ENCODE measurements at regions of chr14 and their contacts with region 1.

Region 1: GRCh38 chr14:72812292-72812911 is 81.5 kb downstream of the DPF3 start:
- DNase-seq: peak; percentile 93 to 99
- ATAC-seq: peak; percentile 88 to 89
- H3K4me3 ChIP-seq: peak overlapping the region; percentile 8 to 31 (median 20)
- H3K27ac ChIP-seq: peak overlapping the region; percentile 90 to 97 (median 94)
- H3K4me1 ChIP-seq: peaks cover 64 to 71% of the 10 kb centered on the region in 2 donors
- H3K27me3 ChIP-seq: no peaks in the 10 kb centered on the region
- CTCF ChIP-seq: peak in 2 of 5 experiments; percentile 25 to 31
- POLR2A ChIP-seq: peak; percentile 53 to 62

Region 2: DNA sequence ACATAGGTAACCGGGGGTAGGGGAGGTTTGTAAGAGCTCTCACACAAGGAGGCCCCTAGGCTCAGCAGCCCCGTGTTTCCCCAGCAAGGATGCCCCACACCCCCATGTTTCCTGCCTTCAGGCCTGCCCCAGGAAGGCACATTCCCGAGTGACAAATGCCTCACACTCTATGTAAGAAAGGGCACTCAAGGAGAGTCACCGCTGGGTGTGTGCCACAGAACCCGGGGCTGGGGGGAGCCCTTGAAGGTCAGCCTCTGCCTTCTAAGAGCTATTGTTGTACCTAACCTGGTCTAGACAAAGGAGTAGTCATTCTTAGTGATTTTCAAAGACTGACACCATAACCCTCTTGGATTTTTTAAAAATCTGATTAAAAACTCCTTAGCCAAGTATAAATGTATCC is 252.1 kb before region 1 on chr14:
- in situ Hi-C with region 1: no loop called
- intact Hi-C with region 1: loop called (anchors 5 kb)
- DNase-seq: no peak
- ATAC-seq: no peak
- H3K4me3 ChIP-seq: no peak overlapping the region
- H3K27ac ChIP-seq: peak overlapping the region in 1 of 4 donors; percentile 10
- H3K4me1 ChIP-seq: peaks cover 32 to 45% of the 10 kb centered on the region in 2 donors
- H3K27me3 ChIP-seq: no peaks in the 10 kb centered on the region
- CTCF ChIP-seq: no peak
- POLR2A ChIP-seq: no peak

Region 3: DNA sequence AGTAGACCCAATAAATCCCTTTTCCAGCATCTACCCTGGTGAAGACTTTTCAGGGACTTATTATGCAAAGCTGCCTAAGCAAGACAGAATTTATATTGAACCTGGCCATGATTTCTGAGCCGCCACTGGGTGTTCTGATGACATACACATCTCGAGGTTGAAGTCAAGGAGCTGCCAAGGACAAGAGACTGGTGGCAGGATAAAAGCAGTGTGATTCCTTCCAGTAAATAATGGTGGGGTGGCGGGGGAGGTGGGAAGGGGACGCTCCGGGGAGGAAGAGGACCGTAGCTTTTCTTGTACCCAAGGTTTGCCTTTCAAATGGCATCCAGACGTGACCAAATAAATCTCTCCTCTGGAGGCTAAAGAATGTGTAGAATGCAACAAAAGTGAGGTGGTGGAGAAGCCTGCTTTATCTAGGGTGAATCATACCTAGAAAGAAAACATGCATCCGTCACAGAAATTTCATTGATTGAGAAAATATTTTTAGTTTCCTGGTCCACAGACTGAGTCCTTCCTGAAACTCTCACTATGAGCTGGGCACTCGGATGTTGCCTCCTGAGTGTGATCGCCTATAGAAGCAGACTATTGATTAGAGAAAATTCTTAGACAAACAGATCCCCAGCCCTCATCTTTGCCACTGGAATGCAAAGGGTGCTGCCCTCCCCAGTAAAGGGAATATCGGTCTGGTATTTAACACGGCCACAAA is 30.8 kb before region 1 on chr14:
- in situ Hi-C with region 1: no loop called
- intact Hi-C with region 1: no loop called
- DNase-seq: no peak
- ATAC-seq: peak; percentile 52 to 69
- H3K4me3 ChIP-seq: no peak overlapping the region
- H3K27ac ChIP-seq: peak overlapping the region; percentile 67 to 93 (median 77)
- H3K4me1 ChIP-seq: peaks cover 43 to 72% of the 10 kb centered on the region in 2 donors
- H3K27me3 ChIP-seq: no peaks in the 10 kb centered on the region
- CTCF ChIP-seq: no peak
- POLR2A ChIP-seq: no peak

Region 4: DNA sequence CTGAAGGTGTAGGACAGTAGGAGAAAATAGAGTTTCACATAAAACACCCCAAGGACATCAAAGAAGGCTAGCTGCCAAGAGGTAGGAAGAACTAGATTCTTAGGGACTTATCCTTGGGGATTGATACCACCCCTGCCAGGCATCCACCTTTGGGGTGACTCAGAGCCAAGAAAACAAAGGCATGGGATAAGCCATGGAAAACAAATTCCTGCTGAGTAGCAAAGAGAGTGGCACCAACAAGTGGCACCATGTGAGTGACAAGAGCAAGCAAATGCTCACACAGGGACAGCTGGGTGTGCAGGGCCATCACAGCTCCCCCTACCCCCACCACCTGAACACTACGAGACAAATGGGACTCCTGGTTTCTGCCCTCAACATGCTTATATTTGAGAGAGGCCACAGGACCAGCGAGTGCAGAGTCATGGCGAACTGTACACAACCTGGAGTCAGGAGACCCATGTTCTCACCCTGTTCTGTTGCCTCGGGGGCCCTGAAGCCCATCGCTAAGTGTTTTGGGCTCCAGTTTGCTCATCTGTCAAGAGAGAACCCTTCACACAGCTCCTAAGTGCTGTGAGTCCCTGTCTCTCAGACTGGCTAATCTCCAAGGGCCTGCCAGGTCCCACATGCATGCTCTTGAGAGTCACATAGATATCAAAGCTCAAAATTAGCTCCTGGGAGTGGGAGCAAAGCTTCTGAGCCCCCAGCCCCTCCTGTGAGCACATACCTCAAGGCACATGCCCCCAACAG is 10.4 kb before region 1 on chr14:
- in situ Hi-C with region 1: no loop called
- intact Hi-C with region 1: loop called (anchors 1 kb)
- DNase-seq: peak; percentile 34 to 66
- ATAC-seq: peak; percentile 69 to 70
- H3K4me3 ChIP-seq: no peak overlapping the region
- H3K27ac ChIP-seq: peak overlapping the region; percentile 81 to 95 (median 86)
- H3K4me1 ChIP-seq: peaks cover 58 to 80% of the 10 kb centered on the region in 2 donors
- H3K27me3 ChIP-seq: no peaks in the 10 kb centered on the region
- CTCF ChIP-seq: no peak
- POLR2A ChIP-seq: no peak

Region 5: GRCh38 chr14:72828604-72829003 is 16.2 kb after region 1 on chr14:
- in situ Hi-C with region 1: no loop called
- intact Hi-C with region 1: loop called (anchors 2 kb)
- DNase-seq: peak; percentile 46 to 88
- ATAC-seq: peak; percentile 79 to 94
- H3K4me3 ChIP-seq: no peak overlapping the region
- H3K27ac ChIP-seq: peak overlapping the region; percentile 71 to 79 (median 76)
- H3K4me1 ChIP-seq: peaks cover 42 to 47% of the 10 kb centered on the region in 2 donors
- H3K27me3 ChIP-seq: no peaks in the 10 kb centered on the region
- CTCF ChIP-seq: no peak
- POLR2A ChIP-seq: no peak

Region 6: GRCh38 chr14:72893636-72894321 is 81.4 kb after region 1 on chr14 and contains the start of gene DPF3:
- in situ Hi-C with region 1: loop called in 1 of 4 experiments (anchors 10 kb)
- intact Hi-C with region 1: loop called (anchors 1 kb)
- DNase-seq: peak; percentile 97 to 98
- ATAC-seq: peak; percentile 88 to 91
- H3K4me3 ChIP-seq: peak within 1 kb of the TSS; percentile 89 to 99 (median 96)
- H3K27ac ChIP-seq: peak within 1 kb of the TSS; percentile 91 to 94 (median 94)
- H3K4me1 ChIP-seq: peaks cover 48 to 51% of the 10 kb centered on the region in 2 donors
- H3K27me3 ChIP-seq: no peaks in the 10 kb centered on the region
- CTCF ChIP-seq: no peak
- POLR2A ChIP-seq: peak; percentile 86 to 98
- total RNA-seq, gene DPF3: 16.7 to 27.8 (median 20.3) TPM

Region 7: GRCh38 chr14:72904840-72905561 is 92.6 kb after region 1 on chr14:
- in situ Hi-C with region 1: no loop called
- intact Hi-C with region 1: loop called (anchors 1 kb)
- DNase-seq: peak; percentile 49 to 72
- ATAC-seq: peak; percentile 48 to 49
- H3K4me3 ChIP-seq: no peak overlapping the region
- H3K27ac ChIP-seq: peak overlapping the region; percentile 6 to 87 (median 31)
- H3K4me1 ChIP-seq: peaks cover 37 to 69% of the 10 kb centered on the region in 2 donors
- H3K27me3 ChIP-seq: no peaks in the 10 kb centered on the region
- CTCF ChIP-seq: peak; percentile 92 to 97 (median 95)
- POLR2A ChIP-seq: no peak

Measured in gastrocnemius medialis (tissue), 4 donors.